ENCODE measurements at regions of chr10 and their contacts with region 1.

Region 1: GRCh38 chr10:79374312-79375191 is 27.3 kb downstream of the PPIF start:
- DNase-seq: no peak
- H3K4me3 ChIP-seq: no peak overlapping the region
- H3K27me3 ChIP-seq: no peaks in the 10 kb centered on the region
- CTCF ChIP-seq: peak; percentile 94

Region 2: DNA sequence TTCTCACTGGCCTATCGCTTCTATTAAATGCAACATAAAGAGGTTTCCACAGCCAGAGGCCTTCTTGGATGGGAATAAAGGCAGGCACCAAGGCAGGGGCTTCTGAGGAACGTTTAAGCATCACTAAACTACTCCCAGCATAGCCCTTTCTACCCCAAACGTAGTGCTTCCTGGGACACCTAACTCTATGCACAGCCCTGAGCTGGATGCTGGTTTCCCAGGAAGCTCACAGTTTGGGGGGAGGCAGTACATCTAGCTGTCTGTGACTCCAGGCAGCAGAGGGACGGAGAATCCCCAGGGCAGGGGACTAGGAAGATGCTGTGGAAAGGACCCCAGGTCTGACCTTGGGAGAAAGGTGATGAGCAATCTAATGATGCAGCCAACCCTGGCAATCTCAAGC is 498.6 kb before region 1 on chr10:
- CTCF ChIA-PET with region 1: no interaction called
- POLR2A ChIA-PET with region 1: no interaction called
- DNase-seq: no peak
- H3K4me3 ChIP-seq: no peak overlapping the region
- H3K27me3 ChIP-seq: peaks cover 7% of the 10 kb centered on the region
- CTCF ChIP-seq: no peak

Region 3: DNA sequence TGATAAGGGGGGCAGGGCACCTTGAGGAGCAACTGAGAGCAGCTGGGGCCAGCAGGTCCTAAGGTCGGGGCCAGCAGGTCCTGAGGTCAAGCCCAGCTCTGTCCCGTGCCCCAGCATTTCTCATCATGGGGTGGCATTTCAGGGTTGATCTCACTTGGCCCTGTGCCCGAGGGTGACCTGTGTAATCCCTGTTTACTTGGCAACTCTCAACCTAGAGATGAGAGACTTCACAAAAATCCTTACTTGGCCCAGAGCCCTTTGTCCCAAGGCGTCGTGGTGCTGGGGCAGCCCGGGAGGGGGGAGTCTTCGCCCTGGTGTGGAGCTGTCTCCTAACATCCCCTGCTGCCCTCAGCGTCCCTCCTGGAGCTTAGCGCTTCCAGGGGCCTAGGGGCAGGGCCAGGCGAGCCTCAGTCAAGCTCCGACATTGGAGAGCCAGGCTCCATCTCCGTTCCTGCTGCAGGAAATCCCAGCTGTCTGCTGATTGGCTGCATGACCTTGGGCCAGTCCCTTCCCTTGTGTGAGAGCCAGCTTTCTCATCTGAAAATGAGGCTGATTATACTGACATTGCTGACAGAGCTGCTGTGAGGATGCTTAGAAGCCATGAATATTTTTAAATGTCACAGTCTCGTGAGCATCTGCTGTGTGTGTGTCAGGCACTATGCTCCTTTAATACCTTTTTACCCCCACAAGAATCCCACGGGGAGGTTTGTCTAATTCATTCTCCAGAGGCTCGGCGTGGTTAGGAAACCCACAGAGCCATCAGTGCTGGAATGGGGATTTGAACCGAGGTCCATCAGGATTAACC is 211.5 kb before region 1 on chr10:
- CTCF ChIA-PET with region 1: no interaction called
- POLR2A ChIA-PET with region 1: no interaction called
- DNase-seq: no peak
- H3K4me3 ChIP-seq: no peak overlapping the region
- H3K27me3 ChIP-seq: no peaks in the 10 kb centered on the region
- CTCF ChIP-seq: no peak

Region 4: DNA sequence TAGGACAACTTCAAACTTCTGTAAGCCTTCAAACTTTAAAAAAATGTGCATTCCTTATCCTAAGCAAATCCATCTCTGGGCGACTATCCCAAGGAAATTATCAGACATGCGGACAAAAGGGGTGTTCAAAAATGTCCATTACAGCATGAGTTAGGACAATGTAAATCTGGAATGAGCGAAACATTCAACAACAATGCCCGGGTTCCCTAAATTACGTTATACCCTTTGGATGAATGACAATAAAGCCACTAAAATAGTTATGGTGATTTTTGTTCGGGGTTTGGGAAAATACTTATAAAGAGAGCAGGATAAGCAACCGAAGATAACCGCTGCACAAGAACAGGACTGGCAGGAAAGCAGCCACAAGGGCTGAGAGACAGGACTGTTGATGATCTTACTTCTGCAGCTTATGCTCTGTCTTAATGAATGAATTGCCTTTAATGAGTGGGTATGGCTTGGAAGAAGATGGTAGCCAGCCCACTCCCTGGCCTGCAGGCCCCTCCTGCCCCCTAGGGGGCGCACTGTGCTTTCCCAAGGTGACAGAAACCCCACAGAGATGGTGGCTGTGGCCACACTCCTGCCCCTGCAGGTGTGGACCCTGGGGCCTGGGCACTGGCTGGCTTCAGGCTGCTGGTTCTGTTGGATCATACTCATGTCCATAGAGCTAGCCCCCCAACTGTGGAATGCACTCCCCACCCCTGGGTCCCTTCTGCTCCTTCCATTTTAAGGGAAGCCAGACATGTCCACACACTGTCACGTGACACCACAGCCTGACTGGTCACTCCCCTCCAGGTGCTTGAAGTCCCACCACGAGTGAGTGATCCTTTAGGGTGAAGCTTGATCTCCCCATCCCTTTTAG is 25.8 kb after region 1 on chr10:
- CTCF ChIA-PET with region 1: interaction called, 18 read pairs
- POLR2A ChIA-PET with region 1: interaction called, 3 read pairs
- DNase-seq: no peak
- H3K4me3 ChIP-seq: no peak overlapping the region; the same call in 1 of the 2 replicates
- H3K27me3 ChIP-seq: no peaks in the 10 kb centered on the region
- CTCF ChIP-seq: peak; percentile 79

Region 5: GRCh38 chr10:79445141-79445976 is 70.8 kb after region 1 on chr10 and contains the start of gene ZCCHC24:
- CTCF ChIA-PET with region 1: interaction called, 22 read pairs
- POLR2A ChIA-PET with region 1: no interaction called
- DNase-seq: peak; percentile 94
- H3K4me3 ChIP-seq: peak within 1 kb of the TSS; percentile 70
- H3K27me3 ChIP-seq: no peaks in the 10 kb centered on the region
- CTCF ChIP-seq: no peak
- polyA plus RNA-seq, gene ZCCHC24: 34.2 and 49.1 TPM in 2 replicates

Region 6: DNA sequence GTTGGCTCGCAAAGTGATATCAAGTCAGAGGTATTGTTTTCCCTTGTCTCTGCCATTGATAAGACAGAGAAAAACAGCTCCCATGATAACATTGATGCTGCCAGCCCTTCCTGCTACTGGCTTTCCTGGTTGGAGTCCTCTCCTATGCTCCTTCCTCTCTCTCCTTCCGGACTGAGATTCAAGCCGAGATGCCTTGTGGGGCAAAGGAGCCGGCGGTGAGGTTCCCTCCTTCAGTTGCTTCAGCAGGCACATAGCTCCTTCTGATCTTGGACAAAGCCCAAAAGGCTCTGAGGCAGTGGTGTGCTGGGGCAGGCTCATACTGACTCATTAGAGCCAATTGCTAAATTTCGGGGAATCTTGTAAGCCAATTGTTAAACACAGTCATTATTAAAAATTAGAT is 79.7 kb after region 1 on chr10:
- CTCF ChIA-PET with region 1: interaction called, 14 read pairs
- POLR2A ChIA-PET with region 1: no interaction called
- DNase-seq: peak; percentile 54
- H3K4me3 ChIP-seq: no peak overlapping the region
- H3K27me3 ChIP-seq: no peaks in the 10 kb centered on the region
- CTCF ChIP-seq: no peak

Region 7: GRCh38 chr10:79468024-79468560 is 93.5 kb after region 1 on chr10:
- CTCF ChIA-PET with region 1: interaction called, 56 read pairs
- POLR2A ChIA-PET with region 1: no interaction called
- DNase-seq: no peak
- H3K4me3 ChIP-seq: no peak overlapping the region
- H3K27me3 ChIP-seq: no peaks in the 10 kb centered on the region
- CTCF ChIP-seq: no peak

Region 8: GRCh38 chr10:79487296-79488194 is 113.0 kb after region 1 on chr10:
- CTCF ChIA-PET with region 1: interaction called, 36 read pairs
- POLR2A ChIA-PET with region 1: no interaction called
- DNase-seq: no peak
- H3K4me3 ChIP-seq: no peak overlapping the region
- H3K27me3 ChIP-seq: no peaks in the 10 kb centered on the region
- CTCF ChIP-seq: peak; percentile 65

Region 9: DNA sequence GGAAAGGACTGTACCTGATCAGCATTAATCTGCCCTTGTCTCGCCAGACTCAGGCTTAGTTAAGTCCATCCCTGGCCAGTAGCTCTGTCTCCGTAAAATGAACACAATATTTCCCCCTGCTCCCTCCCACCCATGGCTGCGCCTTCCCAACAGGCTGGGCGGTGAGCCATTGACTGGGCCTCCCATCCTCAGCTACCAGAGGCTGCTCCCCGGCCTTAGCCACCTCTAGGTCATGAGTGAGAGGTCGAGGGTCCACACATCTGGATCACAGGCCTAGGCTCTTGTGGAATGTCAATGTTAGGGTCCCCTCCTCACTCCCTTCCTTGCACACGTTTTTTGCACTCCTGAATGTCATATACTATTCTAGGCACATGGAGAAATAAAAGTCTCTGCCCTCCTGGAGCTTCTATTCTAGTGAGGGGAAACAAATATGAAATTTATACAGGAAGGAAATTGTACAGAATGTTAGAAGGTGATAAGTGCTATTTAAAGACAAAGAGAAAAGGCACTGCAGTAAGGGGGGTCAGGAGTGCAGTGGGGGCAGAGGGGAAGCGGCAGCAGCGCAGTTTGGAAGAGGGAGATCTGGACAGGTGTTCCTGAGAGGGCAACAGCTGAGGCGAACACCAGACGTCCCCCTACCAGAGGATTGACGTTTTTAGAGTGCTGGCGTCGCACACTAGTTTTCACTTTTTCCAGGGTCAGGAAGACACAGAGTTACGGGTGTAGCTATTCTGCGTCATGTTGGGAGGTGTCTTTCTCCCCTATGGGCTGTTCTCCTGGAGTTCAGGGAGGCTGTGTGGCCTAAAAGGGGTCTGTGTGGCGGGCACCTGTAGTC is 120.5 kb after region 1 on chr10:
- CTCF ChIA-PET with region 1: interaction called, 10 read pairs
- POLR2A ChIA-PET with region 1: no interaction called
- DNase-seq: no peak
- H3K4me3 ChIP-seq: no peak overlapping the region
- H3K27me3 ChIP-seq: peaks cover 8% of the 10 kb centered on the region
- CTCF ChIP-seq: no peak

Measured in BJ (cell line).